Gastrocnemius medialis (tissue), 4 donors: ENCODE measurements at regions of chr17 and their contacts with region 1.

Region 1: DNA sequence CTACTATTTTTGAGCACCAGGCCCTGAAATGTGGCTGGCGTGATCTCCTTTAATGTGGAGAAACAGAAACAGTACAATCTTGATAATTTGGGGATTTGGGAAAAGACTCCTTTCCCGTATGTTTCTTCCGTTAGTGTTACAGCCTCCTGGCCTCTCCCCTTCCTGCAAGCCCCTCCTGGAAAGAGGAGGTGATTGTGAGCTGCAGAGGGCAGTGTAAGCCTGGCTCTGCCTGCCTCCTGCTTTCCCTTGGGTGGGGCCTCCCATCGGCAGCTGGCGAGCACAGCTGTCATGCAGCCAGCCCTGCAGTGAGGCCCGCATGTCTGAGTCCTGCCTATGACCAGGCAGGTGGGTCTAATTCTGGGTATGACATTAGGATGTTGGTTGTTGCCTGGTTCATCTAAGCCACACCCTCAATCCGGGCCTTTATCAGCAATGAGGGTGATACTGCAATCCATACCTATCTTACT is 48.7 kb upstream of the WSB1 start:
- DNase-seq: peak; percentile 66 to 88
- ATAC-seq: peak; percentile 73 to 82
- H3K4me3 ChIP-seq: peak overlapping the region in 3 of 4 donors; percentile 12 to 41 (median 41)
- H3K27ac ChIP-seq: peak overlapping the region; percentile 63 to 87 (median 81)
- H3K4me1 ChIP-seq: peaks cover 19 to 27% of the 10 kb centered on the region in 2 donors
- H3K27me3 ChIP-seq: no peaks in the 10 kb centered on the region
- CTCF ChIP-seq: peak; percentile 59 to 79 (median 70)
- POLR2A ChIP-seq: no peak

Region 2: GRCh38 chr17:27293898-27294688 is 48.8 kb after region 1 on chr17 and contains the start of gene WSB1:
- in situ Hi-C with region 1: no loop called
- intact Hi-C with region 1: loop called (anchors 1 kb)
- DNase-seq: peak; percentile 81 to 86
- ATAC-seq: peak; percentile 85 to 88
- H3K4me3 ChIP-seq: peak within 1 kb of the TSS; percentile 84 to 94 (median 86)
- H3K27ac ChIP-seq: peak within 1 kb of the TSS; percentile 96 to 99 (median 98)
- H3K4me1 ChIP-seq: peaks cover 37 to 40% of the 10 kb centered on the region in 2 donors
- H3K27me3 ChIP-seq: no peaks in the 10 kb centered on the region
- CTCF ChIP-seq: peak in 1 of 5 experiments; percentile 12
- POLR2A ChIP-seq: peak; percentile 97 to 99
- total RNA-seq, gene WSB1: 15.8 to 48.1 (median 20.4) TPM

Region 3: GRCh38 chr17:27323524-27324206 is 78.4 kb after region 1 on chr17:
- in situ Hi-C with region 1: no loop called
- intact Hi-C with region 1: loop called (anchors 1 kb)
- DNase-seq: peak; percentile 28 to 65
- ATAC-seq: no peak
- H3K4me3 ChIP-seq: no peak overlapping the region
- H3K27ac ChIP-seq: peak overlapping the region; percentile 35 to 53 (median 44)
- H3K4me1 ChIP-seq: peaks cover 31 to 38% of the 10 kb centered on the region in 2 donors
- H3K27me3 ChIP-seq: no peaks in the 10 kb centered on the region
- CTCF ChIP-seq: no peak
- POLR2A ChIP-seq: no peak

Region 4: GRCh38 chr17:27332485-27333409 is 87.5 kb after region 1 on chr17:
- in situ Hi-C with region 1: loop called in 3 of 4 experiments (anchors 5 to 10 kb)
- intact Hi-C with region 1: loop called (anchors 1 kb)
- DNase-seq: peak; percentile 97 to 99
- ATAC-seq: peak; percentile 89 to 91
- H3K4me3 ChIP-seq: peak overlapping the region; percentile 48 to 57 (median 52)
- H3K27ac ChIP-seq: peak overlapping the region; percentile 89 to 95 (median 94)
- H3K4me1 ChIP-seq: peaks cover 16 to 17% of the 10 kb centered on the region in 2 donors
- H3K27me3 ChIP-seq: no peaks in the 10 kb centered on the region
- CTCF ChIP-seq: peak; percentile 93 to 97 (median 94)
- POLR2A ChIP-seq: peak; percentile 36 to 56

Region 5: GRCh38 chr17:27396941-27397340 is 151.7 kb after region 1 on chr17:
- in situ Hi-C with region 1: no loop called
- intact Hi-C with region 1: no loop called
- DNase-seq: no peak
- ATAC-seq: no peak
- H3K4me3 ChIP-seq: no peak overlapping the region
- H3K27ac ChIP-seq: no peak overlapping the region
- H3K4me1 ChIP-seq: no peaks in the 10 kb centered on the region
- H3K27me3 ChIP-seq: no peaks in the 10 kb centered on the region
- CTCF ChIP-seq: no peak
- POLR2A ChIP-seq: no peak

Region 6: GRCh38 chr17:27494192-27495091 is 249.2 kb after region 1 on chr17:
- in situ Hi-C with region 1: loop called in 1 of 4 experiments (anchors 25 kb)
- intact Hi-C with region 1: no loop called
- DNase-seq: peak; percentile 34 to 73
- ATAC-seq: peak; percentile 73 to 84
- H3K4me3 ChIP-seq: peak overlapping the region; percentile 12 to 36 (median 18)
- H3K27ac ChIP-seq: peak overlapping the region; percentile 5 to 27 (median 13)
- H3K4me1 ChIP-seq: peaks cover 18% of the 10 kb centered on the region in 2 donors
- H3K27me3 ChIP-seq: no peaks in the 10 kb centered on the region
- CTCF ChIP-seq: peak; percentile 33 to 63 (median 44)
- POLR2A ChIP-seq: no peak

Region 7: DNA sequence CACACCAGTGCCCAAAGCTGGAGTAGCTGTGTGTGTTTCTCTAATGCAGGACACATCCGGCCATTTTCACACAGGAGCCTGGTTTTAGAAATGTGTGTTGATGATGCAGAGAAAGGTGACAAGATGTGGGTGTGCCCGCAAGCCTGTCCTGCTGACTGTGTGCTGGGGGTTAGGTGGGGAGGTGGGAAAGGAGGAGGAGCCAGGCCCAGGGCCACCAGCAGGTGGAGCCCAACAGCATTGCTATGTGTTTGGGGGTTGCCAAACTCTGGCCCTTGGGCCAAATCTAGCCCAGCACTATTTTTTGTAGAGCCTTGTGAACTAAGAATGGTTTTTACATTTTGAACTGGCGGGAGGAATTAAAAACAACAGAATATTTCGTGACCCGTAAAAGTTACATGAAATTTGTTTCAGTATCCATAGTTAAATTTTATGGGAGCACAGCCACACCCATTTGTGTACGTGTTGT is 324.0 kb after region 1 on chr17:
- in situ Hi-C with region 1: no loop called
- intact Hi-C with region 1: loop called (anchors 2 kb)
- DNase-seq: peak in 1 of 2 donors; percentile 76
- ATAC-seq: peak; percentile 17 to 25
- H3K4me3 ChIP-seq: no peak overlapping the region
- H3K27ac ChIP-seq: peak overlapping the region; percentile 95 to 99 (median 97)
- H3K4me1 ChIP-seq: peaks cover 69 to 76% of the 10 kb centered on the region in 2 donors
- H3K27me3 ChIP-seq: no peaks in the 10 kb centered on the region
- CTCF ChIP-seq: peak; percentile 40 to 87 (median 76)
- POLR2A ChIP-seq: no peak